ENCODE measurements at regions of chr19 and their contacts with region 1.

Region 1: GRCh38 chr19:14347999-14348889 is 33.0 kb upstream of the ADGRE5 start:
- DNase-seq: no peak
- H3K4me3 ChIP-seq: peak overlapping the region; percentile 50
- CTCF ChIP-seq: peak; percentile 98

Region 2: GRCh38 chr19:14136509-14137281 is 211.5 kb before region 1 on chr19 and contains the start of gene ASF1B:
- CTCF ChIA-PET with region 1: interaction called, 106 read pairs
- POLR2A ChIA-PET with region 1: interaction called, 5 read pairs
- DNase-seq: peak; percentile 99
- H3K4me3 ChIP-seq: peak within 1 kb of the TSS; percentile 84
- CTCF ChIP-seq: peak; percentile 65

Region 3: GRCh38 chr19:14175351-14175792 is 172.9 kb before region 1 on chr19:
- CTCF ChIA-PET with region 1: interaction called, 22 read pairs
- POLR2A ChIA-PET with region 1: no interaction called
- DNase-seq: no peak
- H3K4me3 ChIP-seq: no peak overlapping the region
- CTCF ChIP-seq: no peak

Region 4: DNA sequence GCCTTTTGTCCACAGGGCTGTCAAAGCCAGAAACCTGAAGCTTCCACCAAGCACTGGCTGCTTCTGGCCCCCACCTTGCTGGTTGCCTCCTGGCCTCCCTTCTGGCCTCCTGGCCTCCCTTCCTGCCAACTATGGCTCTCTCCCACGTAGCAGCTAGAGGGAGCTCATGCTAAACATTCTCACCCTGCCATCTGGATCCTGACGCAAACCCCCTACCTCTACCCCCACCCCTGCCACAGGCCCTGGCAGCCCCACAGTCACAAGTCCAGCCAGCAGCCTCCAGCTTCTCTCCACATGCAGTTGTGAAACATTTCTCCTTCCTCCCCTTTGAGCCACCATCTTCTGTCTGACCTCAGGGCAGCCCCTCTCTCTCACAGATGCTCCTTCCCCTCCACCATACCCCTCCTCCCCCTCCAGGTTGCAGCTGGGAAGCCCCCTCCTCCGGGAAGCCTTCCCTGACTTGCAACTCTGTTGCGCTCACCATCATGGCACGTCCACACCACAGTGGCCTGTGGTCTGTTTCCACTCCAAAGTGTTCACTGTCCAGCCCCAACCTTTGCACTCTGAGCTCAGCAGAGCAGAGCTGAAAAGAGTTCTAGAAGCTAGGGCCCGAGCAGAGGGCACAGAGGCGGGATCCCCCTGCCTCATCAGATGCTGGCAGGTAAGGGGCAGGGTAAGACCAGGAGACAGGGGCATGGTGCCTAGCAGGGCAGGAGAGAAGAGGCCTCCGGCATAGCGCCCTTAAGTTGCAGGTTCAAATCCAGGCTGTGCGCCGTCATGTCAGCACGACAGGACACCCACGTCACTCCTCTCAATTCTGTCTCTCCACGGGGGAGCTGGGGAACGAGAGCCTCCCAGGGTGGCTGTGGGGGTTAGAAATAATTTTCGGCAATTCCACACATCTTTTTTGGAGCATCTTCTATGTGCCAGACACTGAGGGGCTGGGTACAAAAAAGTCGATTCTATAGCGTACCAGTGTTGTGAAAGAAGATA is 149.6 kb before region 1 on chr19:
- CTCF ChIA-PET with region 1: interaction called, 155 read pairs
- POLR2A ChIA-PET with region 1: no interaction called
- DNase-seq: no peak
- H3K4me3 ChIP-seq: no peak overlapping the region
- CTCF ChIP-seq: no peak

Region 5: GRCh38 chr19:14337510-14337909 is 10.7 kb before region 1 on chr19:
- CTCF ChIA-PET with region 1: interaction called, 79 read pairs
- POLR2A ChIA-PET with region 1: no interaction called
- DNase-seq: no peak
- H3K4me3 ChIP-seq: no peak overlapping the region
- CTCF ChIP-seq: no peak

Region 6: GRCh38 chr19:14383661-14384555 is 35.7 kb after region 1 on chr19:
- CTCF ChIA-PET with region 1: interaction called, 11 read pairs
- POLR2A ChIA-PET with region 1: no interaction called
- DNase-seq: no peak
- H3K4me3 ChIP-seq: peak overlapping the region; percentile 6
- CTCF ChIP-seq: peak; percentile 3

Region 7: DNA sequence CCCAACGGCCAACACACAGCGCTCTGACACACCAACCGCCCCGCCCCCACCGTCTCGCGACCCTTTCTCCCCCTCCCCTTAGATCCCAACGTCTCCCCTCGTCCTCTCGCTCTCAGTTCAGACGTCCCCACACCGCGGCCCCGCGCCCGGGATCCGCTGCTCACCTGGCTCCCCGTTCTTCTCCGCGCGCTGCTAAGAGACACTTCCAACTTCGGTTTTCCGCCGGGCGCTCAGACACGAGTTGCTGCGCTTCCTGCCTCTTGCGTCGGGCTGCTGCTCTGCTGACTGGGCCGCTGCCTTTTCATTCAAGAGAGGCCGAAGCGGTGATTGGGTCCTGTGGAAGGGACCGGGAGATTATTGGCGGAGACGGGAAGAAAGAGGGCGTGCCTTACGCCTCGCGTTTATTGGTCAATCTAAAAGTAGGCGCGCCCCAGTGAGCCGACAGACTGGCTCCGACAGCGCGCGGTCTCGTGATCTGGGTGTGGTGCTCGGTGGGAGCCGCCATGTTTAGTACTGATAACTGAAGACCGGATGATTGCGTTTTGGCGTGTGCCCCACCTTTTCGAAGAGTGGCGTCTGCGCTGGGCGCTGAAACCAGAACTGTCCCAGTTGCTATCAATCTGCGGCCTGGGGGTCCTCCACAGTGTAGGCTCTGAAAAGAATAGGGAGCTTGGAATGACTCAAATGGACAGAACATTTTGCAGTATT is 71.0 kb after region 1 on chr19 and contains the start of gene DDX39A:
- CTCF ChIA-PET with region 1: no interaction called
- POLR2A ChIA-PET with region 1: no interaction called
- DNase-seq: peak; percentile 95
- H3K4me3 ChIP-seq: peak within 1 kb of the TSS; percentile 87
- CTCF ChIP-seq: no peak